WTC11 (cell line): ENCODE measurements at regions of chr1 and their contacts with region 1.

Region 1: GRCh38 chr1:156226116-156226538 is 13.3 kb downstream of the PMF1 start:
- DNase-seq: no peak
- ATAC-seq: no peak
- H3K4me3 Mint-ChIP-seq: no peak overlapping the region
- H3K27ac Mint-ChIP-seq: no peak overlapping the region
- H3K4me1 Mint-ChIP-seq: peaks cover 4% of the 10 kb centered on the region
- H3K27me3 Mint-ChIP-seq: no peaks in the 10 kb centered on the region
- CTCF ChIP-seq: no peak

Region 2: DNA sequence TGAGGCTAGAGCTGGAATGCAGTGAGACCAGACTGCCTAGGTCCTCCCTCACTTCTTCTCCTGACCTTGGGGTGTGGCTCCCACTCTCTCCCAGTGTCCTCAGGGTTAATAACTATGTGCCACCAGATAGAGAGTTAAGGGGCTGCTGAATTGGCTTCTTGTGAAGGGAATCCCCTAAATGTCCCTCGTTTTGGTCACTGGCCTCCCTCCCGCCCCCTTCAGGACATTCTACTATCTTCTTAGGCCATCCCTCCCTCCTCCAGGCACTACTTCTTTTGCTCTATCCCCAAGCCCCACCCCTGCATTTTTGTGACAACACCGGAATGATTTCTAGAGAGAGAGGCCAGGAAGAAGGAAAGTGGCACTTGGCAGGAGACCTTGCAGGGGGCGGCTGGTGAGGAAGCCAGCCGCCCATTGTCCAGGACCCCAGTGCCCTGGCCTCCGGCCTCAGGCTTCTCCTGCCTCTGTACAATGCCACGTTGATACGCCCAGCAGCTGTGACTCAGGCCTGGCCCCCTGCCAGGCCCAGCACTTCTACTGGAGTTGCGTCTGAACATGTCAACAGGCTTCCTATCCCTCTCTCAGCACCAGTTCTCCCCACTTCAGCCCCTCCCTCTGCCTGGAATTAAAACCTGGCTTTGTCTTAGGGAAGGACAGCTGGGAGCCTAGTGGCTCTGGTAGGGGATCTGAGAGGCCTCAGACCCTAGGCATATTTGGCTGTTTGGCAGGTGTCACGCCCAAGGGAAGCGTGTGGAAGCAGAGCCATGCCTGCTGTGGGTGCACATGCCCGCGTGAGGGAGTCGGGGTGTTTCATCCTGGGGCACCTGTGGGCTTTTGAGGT is 102.6 kb before region 1 on chr1:
- CTCF ChIA-PET with region 1: interaction called, 11 read pairs
- POLR2A ChIA-PET with region 1: no interaction called
- DNase-seq: peak; percentile 68
- ATAC-seq: peak; percentile 56
- H3K4me3 Mint-ChIP-seq: peak overlapping the region; percentile 42
- H3K27ac Mint-ChIP-seq: peak overlapping the region; percentile 73
- H3K4me1 Mint-ChIP-seq: peaks cover 57% of the 10 kb centered on the region
- H3K27me3 Mint-ChIP-seq: no peaks in the 10 kb centered on the region
- CTCF ChIP-seq: peak; percentile 16; the same call in 1 of the 2 replicates

Region 3: DNA sequence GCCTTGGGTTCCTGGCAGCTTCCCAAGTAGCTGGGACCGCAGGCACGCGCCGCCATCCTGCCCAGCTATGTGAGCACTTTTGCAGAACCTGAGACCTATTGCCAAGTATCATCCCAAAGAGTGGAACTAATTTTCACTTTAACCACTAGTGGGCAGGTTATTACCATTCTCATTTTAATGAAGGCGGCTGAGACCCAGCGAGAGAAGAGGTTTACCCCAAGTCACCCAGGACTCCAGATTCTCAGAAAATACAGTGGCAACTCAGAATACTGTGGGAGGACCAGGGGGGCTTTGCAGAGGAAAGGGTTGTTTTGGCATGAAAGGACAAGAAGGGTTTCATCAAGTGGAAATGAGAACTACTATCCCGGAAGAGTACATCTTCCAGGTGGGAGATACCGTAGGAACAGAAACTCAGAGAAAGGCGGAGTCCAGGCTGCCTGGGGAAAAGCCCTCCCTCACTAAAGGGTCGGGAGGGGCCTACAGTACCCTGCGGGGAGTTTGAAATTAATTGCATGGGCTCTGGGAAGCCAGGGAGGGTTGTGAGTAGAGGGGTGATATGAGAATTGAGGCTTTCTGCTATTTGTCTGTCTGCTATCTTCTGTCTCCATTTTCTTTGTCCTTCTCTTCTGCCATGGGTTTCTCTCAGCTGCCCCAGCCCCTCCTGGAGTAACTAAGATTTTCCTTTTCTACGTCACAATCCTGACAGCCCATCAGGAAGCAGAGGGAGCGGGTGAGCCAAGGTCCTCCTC is 79.9 kb before region 1 on chr1:
- CTCF ChIA-PET with region 1: interaction called, 358 read pairs
- POLR2A ChIA-PET with region 1: interaction called, 10 read pairs
- DNase-seq: no peak
- ATAC-seq: peak; percentile 12
- H3K4me3 Mint-ChIP-seq: peak overlapping the region; percentile 58
- H3K27ac Mint-ChIP-seq: peak overlapping the region; percentile 87
- H3K4me1 Mint-ChIP-seq: peaks cover 53% of the 10 kb centered on the region
- H3K27me3 Mint-ChIP-seq: no peaks in the 10 kb centered on the region; the same call in 1 of the 2 replicates
- CTCF ChIP-seq: peak; percentile 27; the same call in 1 of the 2 replicates

Region 4: DNA sequence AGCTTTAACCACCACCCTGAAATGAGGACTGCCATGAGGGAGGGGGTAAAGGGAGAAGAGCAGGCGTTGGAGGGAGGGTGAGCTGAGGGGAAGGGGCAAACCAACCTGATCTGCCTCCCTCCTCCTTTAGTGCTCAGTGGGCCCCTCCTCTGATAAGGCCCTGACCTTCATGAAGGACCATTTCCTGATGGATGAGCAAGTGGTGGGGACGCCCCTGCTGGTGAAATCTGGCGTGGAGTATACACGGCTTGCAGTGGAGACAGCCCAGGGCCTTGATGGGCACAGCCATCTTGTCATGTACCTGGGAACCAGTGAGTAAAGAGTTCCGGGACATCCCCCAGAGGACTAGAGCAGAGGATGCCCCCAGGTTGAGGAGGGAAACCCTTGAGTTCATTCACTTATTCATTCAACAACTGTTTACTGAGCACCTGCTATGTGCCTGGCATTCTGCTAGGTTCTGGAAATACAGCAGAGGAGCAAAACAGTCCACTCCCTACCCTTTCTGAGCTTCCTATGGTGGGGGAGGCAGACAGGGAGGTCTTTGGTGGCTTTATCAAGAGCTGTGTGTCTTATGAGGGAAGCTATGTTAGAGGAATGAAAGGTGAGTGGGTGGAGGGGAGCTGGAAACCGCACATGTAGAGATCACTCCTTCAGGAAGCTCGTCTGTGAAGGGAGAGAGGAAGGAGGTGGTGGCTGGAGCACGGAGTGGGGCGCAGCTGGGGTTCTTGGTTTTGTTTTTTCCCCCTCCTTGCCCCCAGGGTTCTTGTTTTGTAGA is 53.2 kb before region 1 on chr1:
- CTCF ChIA-PET with region 1: interaction called, 12 read pairs
- POLR2A ChIA-PET with region 1: no interaction called
- DNase-seq: peak; percentile 64
- ATAC-seq: peak; percentile 89
- H3K4me3 Mint-ChIP-seq: no peak overlapping the region
- H3K27ac Mint-ChIP-seq: no peak overlapping the region; the same call in 1 of the 2 replicates
- H3K4me1 Mint-ChIP-seq: peaks cover 31% of the 10 kb centered on the region
- H3K27me3 Mint-ChIP-seq: no peaks in the 10 kb centered on the region
- CTCF ChIP-seq: no peak

Region 5: GRCh38 chr1:156212833-156213643 is 13.1 kb before region 1 on chr1 and contains the start of gene PMF1:
- CTCF ChIA-PET with region 1: interaction called, 71 read pairs
- POLR2A ChIA-PET with region 1: interaction called, 10 read pairs
- DNase-seq: peak; percentile 97
- ATAC-seq: peak; percentile 95
- H3K4me3 Mint-ChIP-seq: peak within 1 kb of the TSS; percentile 94
- H3K27ac Mint-ChIP-seq: peak within 1 kb of the TSS; percentile 99
- H3K4me1 Mint-ChIP-seq: peaks cover 27% of the 10 kb centered on the region
- H3K27me3 Mint-ChIP-seq: no peaks in the 10 kb centered on the region
- CTCF ChIP-seq: no peak
- total RNA-seq, gene PMF1: 112 to 129 TPM (median 115 TPM) in 3 replicates